ENCODE measurements at regions of chr6 and their contacts with region 1.

Region 1: DNA sequence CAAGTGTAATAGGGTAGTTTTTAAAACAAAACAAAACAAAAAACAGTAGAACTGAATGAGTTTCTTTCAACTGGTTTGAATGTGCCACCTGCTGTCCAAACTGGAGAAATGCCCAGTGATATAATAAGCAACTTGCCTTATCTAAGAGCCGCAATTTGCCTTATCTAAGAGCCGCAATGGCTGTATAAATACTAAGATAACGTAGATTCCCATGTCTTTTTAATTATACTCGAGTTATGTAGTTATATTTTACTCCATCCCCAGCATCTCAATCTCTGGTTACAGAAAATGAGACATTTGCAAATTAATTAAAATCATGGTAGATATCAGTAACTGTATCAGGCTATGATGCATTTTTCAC is 67.2 kb downstream of the RPP40 start:
- H3K4me3 Mint-ChIP-seq: no peak overlapping the region
- H3K27ac Mint-ChIP-seq: no peak overlapping the region
- H3K4me1 Mint-ChIP-seq: peaks cover 20% of the 10 kb centered on the region
- H3K27me3 Mint-ChIP-seq: no peaks in the 10 kb centered on the region

Region 2: GRCh38 chr6:4420160-4420865 is 516.3 kb before region 1 on chr6:
- intact Hi-C with region 1: no loop called
- H3K4me3 Mint-ChIP-seq: no peak overlapping the region
- H3K27ac Mint-ChIP-seq: no peak overlapping the region
- H3K4me1 Mint-ChIP-seq: no peaks in the 10 kb centered on the region
- H3K27me3 Mint-ChIP-seq: no peaks in the 10 kb centered on the region

Region 3: GRCh38 chr6:4788953-4789584 is 147.6 kb before region 1 on chr6:
- intact Hi-C with region 1: loop called (anchors 10 kb)
- H3K4me3 Mint-ChIP-seq: no peak overlapping the region
- H3K27ac Mint-ChIP-seq: peak overlapping the region; percentile 7
- H3K4me1 Mint-ChIP-seq: peaks cover 51% of the 10 kb centered on the region
- H3K27me3 Mint-ChIP-seq: no peaks in the 10 kb centered on the region

Region 4: GRCh38 chr6:5167501-5167900 is 230.8 kb after region 1 on chr6:
- intact Hi-C with region 1: no loop called
- H3K4me3 Mint-ChIP-seq: no peak overlapping the region
- H3K27ac Mint-ChIP-seq: no peak overlapping the region
- H3K4me1 Mint-ChIP-seq: no peaks in the 10 kb centered on the region
- H3K27me3 Mint-ChIP-seq: no peaks in the 10 kb centered on the region